ENCODE measurements at regions of chr2 and their contacts with region 1.

Region 1: GRCh38 chr2:60659026-60659425 is 97.0 kb upstream of the PAPOLG start:
- DNase-seq: no peak
- H3K4me3 ChIP-seq: no peak overlapping the region
- H3K4me3 Mint-ChIP-seq: no peak overlapping the region
- H3K27ac ChIP-seq: no peak overlapping the region
- H3K27ac Mint-ChIP-seq: no peak overlapping the region
- H3K4me1 ChIP-seq: no peaks in the 10 kb centered on the region
- H3K4me1 Mint-ChIP-seq: no peaks in the 10 kb centered on the region
- H3K27me3 ChIP-seq: no peaks in the 10 kb centered on the region
- H3K27me3 Mint-ChIP-seq: peaks cover 5 to 22% of the 10 kb centered on the region in 2 donors

Region 2: GRCh38 chr2:60581433-60582282 is 77.4 kb before region 1 on chr2:
- CTCF ChIA-PET with region 1: no interaction called
- POLR2A ChIA-PET with region 1: no interaction called
- intact Hi-C with region 1: no loop called
- DNase-seq: peak in 4 of 5 donors; percentile 35 to 52 (median 46)
- H3K4me3 ChIP-seq: no peak overlapping the region
- H3K4me3 Mint-ChIP-seq: peak overlapping the region in 2 of 8 donors; percentile 46 to 51
- H3K27ac ChIP-seq: no peak overlapping the region
- H3K27ac Mint-ChIP-seq: no peak overlapping the region
- H3K4me1 ChIP-seq: peaks cover 7% of the 10 kb centered on the region
- H3K4me1 Mint-ChIP-seq: peaks cover 0 to 2% (median under 1%) of the 10 kb centered on the region in 4 donors
- H3K27me3 ChIP-seq: peaks cover 9% of the 10 kb centered on the region
- H3K27me3 Mint-ChIP-seq: peaks cover 20 to 42% of the 10 kb centered on the region in 2 donors

Region 3: GRCh38 chr2:60674524-60675165 is 15.6 kb after region 1 on chr2:
- CTCF ChIA-PET with region 1: interaction called, 20 read pairs
- POLR2A ChIA-PET with region 1: no interaction called
- intact Hi-C with region 1: no loop called
- DNase-seq: peak; percentile 56 to 64 (median 62)
- H3K4me3 ChIP-seq: no peak overlapping the region
- H3K4me3 Mint-ChIP-seq: peak overlapping the region in 2 of 8 donors; percentile 32 to 36
- H3K27ac ChIP-seq: no peak overlapping the region
- H3K27ac Mint-ChIP-seq: peak overlapping the region in 2 of 7 donors; percentile 18 to 82
- H3K4me1 ChIP-seq: no peaks in the 10 kb centered on the region
- H3K4me1 Mint-ChIP-seq: peaks cover 0 to 3% (median 1%) of the 10 kb centered on the region in 4 donors
- H3K27me3 ChIP-seq: no peaks in the 10 kb centered on the region
- H3K27me3 Mint-ChIP-seq: peaks cover 4 to 8% of the 10 kb centered on the region in 2 donors